Calu3 (cell line): ENCODE measurements at regions of chr7 and their contacts with region 1.

Region 1: GRCh38 chr7:148485618-148486017 is 104.9 kb upstream of the C7orf33 start:
- DNase-seq: no peak
- H3K4me3 Mint-ChIP-seq: no peak overlapping the region
- H3K27ac Mint-ChIP-seq: no peak overlapping the region
- H3K4me1 Mint-ChIP-seq: no peaks in the 10 kb centered on the region
- H3K27me3 Mint-ChIP-seq: peaks cover 33% of the 10 kb centered on the region
- CTCF ChIP-seq: no peak

Region 2: DNA sequence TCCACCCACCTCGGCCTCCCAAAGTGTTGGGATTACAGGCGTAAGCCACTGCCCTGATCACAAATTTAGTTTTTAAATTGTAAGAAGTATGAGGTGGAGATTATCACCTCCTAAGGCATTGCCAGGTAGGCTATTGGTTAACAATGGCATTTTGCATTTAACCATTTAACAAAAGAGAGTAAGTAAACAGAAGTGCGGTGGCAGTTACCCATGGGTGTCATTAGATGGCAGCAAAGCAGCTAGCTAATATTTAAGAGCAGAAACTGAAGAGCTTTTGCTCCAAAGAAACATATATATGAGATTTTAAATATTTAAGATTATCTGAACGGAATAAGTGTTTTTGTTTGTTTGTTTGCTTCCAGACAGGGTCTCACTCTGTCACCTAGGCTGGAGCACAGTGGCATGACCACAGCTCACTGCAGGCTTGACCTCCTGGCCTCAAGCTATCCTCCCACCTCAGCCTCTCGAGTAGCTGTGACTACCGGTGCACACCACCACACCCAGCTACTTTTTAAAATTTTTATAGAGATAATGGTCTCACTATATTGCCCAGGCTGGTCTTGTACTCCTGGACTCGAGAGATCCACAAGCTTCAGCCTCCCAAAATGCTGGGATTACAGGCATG is 220.6 kb before region 1 on chr7:
- CTCF ChIA-PET with region 1: interaction called, 11 read pairs
- intact Hi-C with region 1: loop called (anchors 2 kb)
- DNase-seq: peak; percentile 17
- H3K4me3 Mint-ChIP-seq: no peak overlapping the region
- H3K27ac Mint-ChIP-seq: no peak overlapping the region
- H3K4me1 Mint-ChIP-seq: peaks cover 10% of the 10 kb centered on the region
- H3K27me3 Mint-ChIP-seq: peaks cover 71% of the 10 kb centered on the region
- CTCF ChIP-seq: peak; percentile 52

Region 3: GRCh38 chr7:148286150-148286549 is 199.5 kb before region 1 on chr7:
- CTCF ChIA-PET with region 1: no interaction called
- intact Hi-C with region 1: loop called (anchors 1 kb)
- DNase-seq: peak; percentile 29
- H3K4me3 Mint-ChIP-seq: no peak overlapping the region
- H3K27ac Mint-ChIP-seq: no peak overlapping the region
- H3K4me1 Mint-ChIP-seq: no peaks in the 10 kb centered on the region
- H3K27me3 Mint-ChIP-seq: peaks cover 14% of the 10 kb centered on the region
- CTCF ChIP-seq: no peak